WTC11 (cell line): ENCODE measurements at regions of chr1 and their contacts with region 1.

Region 1: DNA sequence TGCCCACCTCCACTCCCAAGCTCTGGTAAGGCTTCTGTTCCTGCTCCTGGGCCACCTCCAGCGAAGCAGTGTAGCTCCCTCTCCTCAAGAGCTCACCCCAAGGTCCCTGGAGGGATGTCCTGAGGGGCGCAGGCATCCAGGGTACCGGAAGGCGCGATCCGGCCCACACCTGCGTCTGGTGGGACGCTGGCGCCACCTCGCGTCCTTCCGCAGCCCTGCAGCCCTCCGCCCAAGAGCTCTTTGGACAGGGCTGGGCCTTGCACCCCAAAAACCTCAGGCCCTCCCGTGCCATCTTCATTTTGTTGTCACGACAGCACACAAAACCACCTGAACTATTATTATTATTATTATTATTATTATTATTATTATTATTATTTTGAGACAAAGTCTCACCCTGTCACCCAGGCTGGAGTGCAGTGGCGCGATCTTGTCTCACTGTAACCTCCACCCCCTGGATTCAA is 49.2 kb upstream of the PAX7 start:
- DNase-seq: peak; percentile 81
- ATAC-seq: peak; percentile 83
- H3K4me3 Mint-ChIP-seq: no peak overlapping the region
- H3K27ac Mint-ChIP-seq: no peak overlapping the region
- H3K4me1 Mint-ChIP-seq: no peaks in the 10 kb centered on the region
- H3K27me3 Mint-ChIP-seq: peaks cover 5% of the 10 kb centered on the region
- CTCF ChIP-seq: peak; percentile 89

Region 2: GRCh38 chr1:17909634-17910033 is 671.8 kb before region 1 on chr1:
- CTCF ChIA-PET with region 1: interaction called, 11 read pairs
- POLR2A ChIA-PET with region 1: no interaction called
- DNase-seq: peak; percentile 74
- ATAC-seq: peak; percentile 90
- H3K4me3 Mint-ChIP-seq: no peak overlapping the region
- H3K27ac Mint-ChIP-seq: no peak overlapping the region
- H3K4me1 Mint-ChIP-seq: peaks cover 11% of the 10 kb centered on the region
- H3K27me3 Mint-ChIP-seq: peaks cover 12% of the 10 kb centered on the region
- CTCF ChIP-seq: no peak

Region 3: GRCh38 chr1:18299441-18300338 is 281.8 kb before region 1 on chr1:
- CTCF ChIA-PET with region 1: interaction called, 37 read pairs
- POLR2A ChIA-PET with region 1: no interaction called
- DNase-seq: peak; percentile 52
- ATAC-seq: peak; percentile 4; the same call in 1 of the 2 replicates
- H3K4me3 Mint-ChIP-seq: no peak overlapping the region; the same call in 1 of the 2 replicates
- H3K27ac Mint-ChIP-seq: peak overlapping the region; percentile 95
- H3K4me1 Mint-ChIP-seq: peaks cover 53% of the 10 kb centered on the region
- H3K27me3 Mint-ChIP-seq: no peaks in the 10 kb centered on the region
- CTCF ChIP-seq: peak; percentile 92

Region 4: DNA sequence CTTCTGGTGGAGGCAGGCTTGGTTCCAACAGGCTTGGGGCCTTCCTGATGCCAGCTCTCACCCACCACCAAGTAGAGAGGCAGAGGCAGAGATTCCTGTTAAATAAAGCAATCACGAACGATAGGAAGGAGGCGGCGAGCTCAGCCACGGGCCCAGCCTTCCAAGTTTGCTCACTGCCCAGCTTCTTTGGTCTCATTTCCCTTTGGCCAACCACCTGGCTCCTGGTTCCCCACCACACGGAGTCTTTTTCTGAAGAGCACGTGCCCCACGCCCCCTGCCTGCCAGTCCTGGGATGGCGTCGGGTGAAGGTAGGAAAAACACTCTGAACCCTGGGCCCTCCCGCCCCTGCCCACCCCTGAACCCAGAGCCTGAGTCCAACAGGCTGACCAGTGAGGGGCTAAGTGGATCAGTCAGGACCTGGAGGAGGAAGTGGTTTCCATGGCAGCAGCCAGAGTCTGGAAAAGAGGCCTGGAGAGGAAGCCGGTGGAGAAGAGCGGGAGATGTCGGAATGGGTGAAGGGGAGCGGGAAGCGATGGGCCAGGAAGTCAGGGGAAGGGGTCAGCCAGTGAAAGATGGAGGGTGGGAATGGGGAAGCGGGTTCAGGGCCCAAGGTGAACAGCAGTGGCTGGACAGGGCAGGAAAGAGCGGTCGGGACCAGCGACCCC is 258.9 kb before region 1 on chr1:
- CTCF ChIA-PET with region 1: interaction called, 48 read pairs
- POLR2A ChIA-PET with region 1: no interaction called
- DNase-seq: peak; percentile 66
- ATAC-seq: peak; percentile 67
- H3K4me3 Mint-ChIP-seq: no peak overlapping the region
- H3K27ac Mint-ChIP-seq: no peak overlapping the region
- H3K4me1 Mint-ChIP-seq: peaks cover 29% of the 10 kb centered on the region
- H3K27me3 Mint-ChIP-seq: peaks cover 38% of the 10 kb centered on the region
- CTCF ChIP-seq: peak; percentile 75

Region 5: DNA sequence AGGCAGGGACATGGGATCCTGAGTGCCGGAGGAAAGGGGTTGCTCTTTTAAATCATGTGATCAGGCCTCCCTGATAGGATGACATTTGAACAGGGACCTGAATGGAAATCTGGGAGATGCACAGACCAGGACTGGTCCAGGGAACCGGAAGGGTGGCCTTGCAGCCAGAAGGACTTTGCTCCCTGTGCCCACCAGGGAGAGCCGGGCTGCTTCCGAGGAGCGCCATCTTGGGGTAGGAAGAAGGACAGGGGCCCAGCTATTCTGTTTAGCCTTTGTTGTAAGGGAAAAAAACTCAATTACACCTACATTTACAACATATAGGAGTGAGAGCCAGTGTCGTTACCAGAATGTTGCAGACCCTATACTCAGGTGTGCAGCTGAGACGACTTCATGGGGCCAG is 95.3 kb before region 1 on chr1:
- CTCF ChIA-PET with region 1: interaction called, 10 read pairs
- POLR2A ChIA-PET with region 1: no interaction called
- DNase-seq: peak; percentile 62
- ATAC-seq: peak; percentile 78
- H3K4me3 Mint-ChIP-seq: no peak overlapping the region
- H3K27ac Mint-ChIP-seq: no peak overlapping the region
- H3K4me1 Mint-ChIP-seq: peaks cover 35% of the 10 kb centered on the region
- H3K27me3 Mint-ChIP-seq: peaks cover 7% of the 10 kb centered on the region
- CTCF ChIP-seq: no peak

Region 6: DNA sequence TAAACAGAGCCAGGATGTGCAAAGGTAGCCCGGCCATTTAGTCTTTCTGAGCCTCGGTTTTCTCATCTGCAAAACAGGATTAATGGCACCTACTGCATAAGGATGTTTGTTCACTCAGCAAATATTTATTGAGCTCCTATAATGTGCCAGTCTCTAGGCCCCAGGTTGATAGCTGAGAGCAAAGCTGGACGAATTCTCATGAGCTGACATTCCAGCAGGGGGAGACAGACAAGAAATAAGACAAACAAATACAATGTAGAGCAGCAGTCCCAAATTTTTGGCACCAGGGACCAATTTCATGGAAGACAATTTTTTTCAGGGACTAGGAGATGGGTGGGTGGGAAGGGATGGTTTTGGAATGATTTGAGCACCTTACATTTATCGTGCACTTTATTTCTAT is 25.1 kb before region 1 on chr1:
- CTCF ChIA-PET with region 1: interaction called, 130 read pairs
- POLR2A ChIA-PET with region 1: no interaction called
- DNase-seq: no peak
- ATAC-seq: no peak
- H3K4me3 Mint-ChIP-seq: no peak overlapping the region
- H3K27ac Mint-ChIP-seq: no peak overlapping the region
- H3K4me1 Mint-ChIP-seq: peaks cover 38% of the 10 kb centered on the region
- H3K27me3 Mint-ChIP-seq: peaks cover 30% of the 10 kb centered on the region
- CTCF ChIP-seq: no peak

Region 7: DNA sequence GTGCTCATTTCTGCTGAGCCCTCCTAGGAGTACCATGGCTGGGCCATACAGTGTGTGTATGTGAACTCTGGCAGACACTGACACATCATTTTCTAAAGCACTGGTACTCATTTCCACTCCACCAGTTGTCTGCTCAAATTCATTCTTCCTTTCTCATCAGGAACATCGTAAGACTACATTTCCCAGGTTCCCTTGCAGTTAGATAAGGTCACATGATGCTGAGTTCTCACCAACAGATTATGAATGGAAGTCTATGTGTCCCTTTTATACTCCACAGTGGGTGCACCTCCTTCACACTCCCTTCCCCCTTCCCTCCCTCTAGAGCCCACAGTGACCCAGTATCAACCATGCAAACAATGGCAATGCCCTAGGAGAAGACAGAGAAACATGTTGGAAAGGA is 10.9 kb after region 1 on chr1:
- CTCF ChIA-PET with region 1: interaction called, 18 read pairs
- POLR2A ChIA-PET with region 1: interaction called, 5 read pairs
- DNase-seq: no peak
- ATAC-seq: peak; percentile 46; the same call in 1 of the 2 replicates
- H3K4me3 Mint-ChIP-seq: no peak overlapping the region
- H3K27ac Mint-ChIP-seq: no peak overlapping the region
- H3K4me1 Mint-ChIP-seq: no peaks in the 10 kb centered on the region
- H3K27me3 Mint-ChIP-seq: peaks cover 18% of the 10 kb centered on the region
- CTCF ChIP-seq: no peak

Region 8: GRCh38 chr1:18854331-18855025 is 273.0 kb after region 1 on chr1:
- CTCF ChIA-PET with region 1: no interaction called
- POLR2A ChIA-PET with region 1: no interaction called
- DNase-seq: no peak
- ATAC-seq: no peak
- H3K4me3 Mint-ChIP-seq: no peak overlapping the region
- H3K27ac Mint-ChIP-seq: no peak overlapping the region
- H3K4me1 Mint-ChIP-seq: no peaks in the 10 kb centered on the region
- H3K27me3 Mint-ChIP-seq: peaks cover 2% of the 10 kb centered on the region; the same call in 1 of the 2 replicates
- CTCF ChIP-seq: no peak

Region 9: GRCh38 chr1:18926315-18927081 is 345.0 kb after region 1 on chr1:
- CTCF ChIA-PET with region 1: no interaction called
- POLR2A ChIA-PET with region 1: no interaction called
- DNase-seq: no peak
- ATAC-seq: no peak
- H3K4me3 Mint-ChIP-seq: no peak overlapping the region
- H3K27ac Mint-ChIP-seq: no peak overlapping the region
- H3K4me1 Mint-ChIP-seq: peaks cover 27% of the 10 kb centered on the region
- H3K27me3 Mint-ChIP-seq: no peaks in the 10 kb centered on the region
- CTCF ChIP-seq: no peak